ENCODE measurements at regions of chr12 and their contacts with region 1.

Region 1: GRCh38 chr12:121811434-121812319 is 7.9 kb downstream of the SETD1B start:
- DNase-seq: peak in 1 of 2 donors; percentile 86
- H3K4me3 ChIP-seq: peak overlapping the region; percentile 57
- H3K27ac ChIP-seq: peak overlapping the region; percentile 74 to 88
- H3K4me1 ChIP-seq: peaks cover 0 to 54% (median 52%) of the 10 kb centered on the region in 4 donors
- H3K27me3 ChIP-seq: no peaks in the 10 kb centered on the region
- CTCF ChIP-seq: peak; percentile 98 to 99

Region 2: DNA sequence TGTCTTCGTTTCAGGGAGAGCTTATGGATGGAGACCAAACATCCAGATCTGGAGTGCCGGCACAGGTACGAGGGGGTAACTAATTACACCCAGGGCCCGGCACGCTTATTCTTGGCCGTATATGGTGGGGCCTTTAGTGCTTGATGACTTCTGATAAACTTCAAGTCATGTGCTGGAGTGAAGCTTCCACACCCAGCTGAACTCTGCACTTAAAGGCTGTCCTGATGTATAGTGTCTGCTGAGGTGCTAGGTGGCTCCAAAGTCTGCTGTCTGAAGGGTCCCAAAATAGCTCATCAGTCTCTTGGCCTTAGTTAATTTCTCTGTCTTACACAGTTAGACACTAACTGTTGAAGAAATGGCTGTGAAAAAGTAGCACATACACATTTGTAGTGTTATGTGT is 393.8 kb before region 1 on chr12:
- intact Hi-C with region 1: no loop called
- DNase-seq: no peak
- H3K4me3 ChIP-seq: no peak overlapping the region
- H3K27ac ChIP-seq: no peak overlapping the region
- H3K4me1 ChIP-seq: peaks cover 0 to 7% (median 0%) of the 10 kb centered on the region in 4 donors
- H3K27me3 ChIP-seq: no peaks in the 10 kb centered on the region
- CTCF ChIP-seq: no peak

Region 3: GRCh38 chr12:121626087-121626852 is 185.4 kb before region 1 on chr12 and contains the start of gene ORAI1:
- intact Hi-C with region 1: no loop called
- DNase-seq: peak; percentile 96 to 98
- H3K4me3 ChIP-seq: peak within 1 kb of the TSS; percentile 55 to 67
- H3K27ac ChIP-seq: peak within 1 kb of the TSS; percentile 79
- H3K4me1 ChIP-seq: peaks cover 0 to 27% (median 7%) of the 10 kb centered on the region in 4 donors
- H3K27me3 ChIP-seq: no peaks in the 10 kb centered on the region
- CTCF ChIP-seq: peak in 1 of 2 experiments; percentile 43

Region 4: DNA sequence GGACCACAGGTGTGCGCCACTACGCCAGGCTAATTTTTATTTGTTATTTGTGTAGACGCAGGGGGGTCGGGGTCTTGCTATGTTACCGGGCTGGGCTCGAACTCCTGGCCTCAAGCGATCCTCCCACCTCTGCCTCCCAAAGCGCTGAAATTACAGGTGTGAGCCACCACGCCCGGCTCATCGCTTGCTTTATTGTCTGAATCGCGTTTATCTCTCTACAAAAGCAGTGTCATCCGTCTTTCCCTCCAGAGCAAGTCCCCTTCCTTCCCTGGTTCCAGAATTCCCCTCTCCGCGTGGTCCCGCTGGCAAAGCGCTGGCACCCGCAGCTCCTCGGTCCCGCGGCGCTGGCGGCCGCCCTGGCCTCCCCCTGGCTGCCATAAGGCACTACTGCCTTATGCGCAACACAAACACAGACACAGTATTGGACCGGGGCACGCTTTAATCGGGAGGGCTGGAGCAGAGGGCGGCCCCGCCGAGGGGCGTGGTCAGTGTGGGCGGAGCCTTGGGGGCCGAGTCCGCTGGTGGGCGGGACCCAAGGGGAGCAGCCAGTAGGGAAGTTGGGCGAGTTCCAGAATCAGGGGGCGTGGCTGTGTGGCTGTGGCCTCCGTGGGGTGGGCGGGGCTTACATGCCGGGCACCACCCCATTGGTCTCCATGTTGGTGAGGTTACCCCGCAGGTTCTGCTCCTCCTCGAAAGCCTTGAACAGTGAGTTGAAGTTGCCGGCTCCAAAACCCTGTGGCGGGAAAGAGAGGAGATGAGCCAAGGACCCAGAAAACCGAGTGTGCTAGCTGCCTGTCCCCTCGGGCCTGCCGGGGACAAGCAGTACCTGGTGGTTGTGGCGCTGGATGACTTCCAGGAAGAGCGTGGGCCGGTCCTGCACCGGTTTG is 27.7 kb after region 1 on chr12:
- intact Hi-C with region 1: no loop called
- DNase-seq: peak; percentile 100
- H3K4me3 ChIP-seq: peak overlapping the region; percentile 57 to 66
- H3K27ac ChIP-seq: peak overlapping the region; percentile 66 to 69
- H3K4me1 ChIP-seq: peaks cover 0 to 13% (median 7%) of the 10 kb centered on the region in 4 donors
- H3K27me3 ChIP-seq: no peaks in the 10 kb centered on the region
- CTCF ChIP-seq: peak; percentile 45 to 65

Region 5: GRCh38 chr12:121888478-121889266 is 77.0 kb after region 1 on chr12 and contains the start of gene PSMD9:
- intact Hi-C with region 1: loop called (anchors 5 kb)
- DNase-seq: peak; percentile 96 to 98
- H3K4me3 ChIP-seq: peak within 1 kb of the TSS; percentile 85 to 86
- H3K27ac ChIP-seq: peak within 1 kb of the TSS; percentile 93 to 96
- H3K4me1 ChIP-seq: peaks cover 0 to 41% (median 20%) of the 10 kb centered on the region in 4 donors
- H3K27me3 ChIP-seq: no peaks in the 10 kb centered on the region
- CTCF ChIP-seq: peak; percentile 66 to 75

Region 6: GRCh38 chr12:121933522-121934308 is 122.0 kb after region 1 on chr12:
- intact Hi-C with region 1: no loop called
- DNase-seq: no peak
- H3K4me3 ChIP-seq: no peak overlapping the region
- H3K27ac ChIP-seq: no peak overlapping the region
- H3K4me1 ChIP-seq: no peaks in the 10 kb centered on the region
- H3K27me3 ChIP-seq: no peaks in the 10 kb centered on the region
- CTCF ChIP-seq: no peak

Measured in tibial artery (tissue), 4 donors.